Testis (tissue), 5 donors: ENCODE measurements at regions of chr14 and their contacts with region 1.

Region 1: DNA sequence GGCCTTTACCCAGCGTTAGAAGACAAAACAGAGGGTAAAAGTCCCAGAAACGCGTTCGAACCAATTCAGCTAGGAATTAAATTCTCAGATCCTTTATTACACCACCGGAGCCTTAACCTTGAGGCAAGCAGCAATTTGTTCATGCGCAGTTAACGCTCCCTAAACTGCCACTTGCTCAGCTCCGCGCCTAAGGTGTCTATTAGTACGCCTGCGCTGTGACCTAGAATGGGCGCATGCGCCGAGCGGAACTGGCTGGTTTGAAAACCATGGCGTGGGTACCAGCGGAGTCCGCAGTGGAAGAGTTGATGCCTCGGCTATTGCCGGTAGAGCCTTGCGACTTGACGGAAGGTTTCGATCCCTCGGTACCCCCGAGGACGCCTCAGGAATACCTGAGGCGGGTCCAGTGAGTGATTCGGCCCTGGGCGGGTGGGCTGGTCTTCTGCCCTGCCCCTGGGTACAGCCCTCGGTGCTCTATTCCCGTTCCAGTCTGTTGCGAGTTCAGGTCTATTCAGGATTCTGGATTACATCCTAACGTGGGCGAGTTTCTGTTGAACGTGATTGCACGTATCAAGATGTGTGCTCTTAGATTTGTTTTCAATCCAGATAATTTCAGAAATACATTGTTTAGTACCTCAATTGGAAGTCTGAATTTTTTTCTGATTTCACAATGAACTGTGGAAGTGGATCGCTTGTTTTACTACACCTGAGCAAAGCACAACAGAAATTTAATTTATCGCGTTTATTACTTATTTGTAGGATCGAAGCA is at the start of gene GEMIN2:
- DNase-seq: peak; percentile 97
- H3K4me3 ChIP-seq: peak within 1 kb of the TSS; percentile 68 to 71
- H3K27ac ChIP-seq: peak within 1 kb of the TSS; percentile 22 to 80
- H3K4me1 ChIP-seq: peaks cover 3% of the 10 kb centered on the region
- H3K27me3 ChIP-seq: no peaks in the 10 kb centered on the region
- CTCF ChIP-seq: peak in 1 of 3 experiments; percentile 21
- POLR2A ChIP-seq: no peak
- total RNA-seq, gene GEMIN2: 28.4 to 36.7 TPM

Region 2: GRCh38 chr14:38989922-38990546 is 124.2 kb before region 1 on chr14:
- intact Hi-C with region 1: no loop called
- DNase-seq: no peak
- H3K4me3 ChIP-seq: no peak overlapping the region
- H3K27ac ChIP-seq: no peak overlapping the region
- H3K4me1 ChIP-seq: no peaks in the 10 kb centered on the region
- H3K27me3 ChIP-seq: no peaks in the 10 kb centered on the region
- CTCF ChIP-seq: no peak
- POLR2A ChIP-seq: no peak

Region 3: DNA sequence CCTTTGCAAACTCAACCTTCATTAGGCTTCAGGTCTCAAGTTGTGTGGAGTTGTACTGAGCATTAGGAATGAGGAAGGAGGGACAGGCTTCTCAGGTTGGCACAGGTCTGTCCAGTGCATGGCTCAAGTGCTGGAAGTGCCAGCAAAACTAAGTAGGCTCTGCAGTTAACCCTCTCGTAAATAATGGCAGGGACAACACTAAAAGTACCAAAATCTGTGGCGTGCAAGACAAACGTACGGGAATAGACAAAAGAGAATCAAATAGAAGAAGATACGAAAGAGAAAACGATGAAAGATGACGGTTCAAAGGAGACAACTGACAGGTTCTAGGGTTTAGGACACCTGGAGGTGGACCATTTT is 55.3 kb after region 1 on chr14:
- intact Hi-C with region 1: loop called (anchors 2 kb)
- DNase-seq: no peak
- H3K4me3 ChIP-seq: peak overlapping the region; percentile 88 to 99
- H3K27ac ChIP-seq: peak overlapping the region; percentile 88 to 98
- H3K4me1 ChIP-seq: peaks cover 12% of the 10 kb centered on the region
- H3K27me3 ChIP-seq: no peaks in the 10 kb centered on the region
- CTCF ChIP-seq: no peak
- POLR2A ChIP-seq: no peak